ENCODE measurements at regions of chr12 and their contacts with region 1.

Region 1: DNA sequence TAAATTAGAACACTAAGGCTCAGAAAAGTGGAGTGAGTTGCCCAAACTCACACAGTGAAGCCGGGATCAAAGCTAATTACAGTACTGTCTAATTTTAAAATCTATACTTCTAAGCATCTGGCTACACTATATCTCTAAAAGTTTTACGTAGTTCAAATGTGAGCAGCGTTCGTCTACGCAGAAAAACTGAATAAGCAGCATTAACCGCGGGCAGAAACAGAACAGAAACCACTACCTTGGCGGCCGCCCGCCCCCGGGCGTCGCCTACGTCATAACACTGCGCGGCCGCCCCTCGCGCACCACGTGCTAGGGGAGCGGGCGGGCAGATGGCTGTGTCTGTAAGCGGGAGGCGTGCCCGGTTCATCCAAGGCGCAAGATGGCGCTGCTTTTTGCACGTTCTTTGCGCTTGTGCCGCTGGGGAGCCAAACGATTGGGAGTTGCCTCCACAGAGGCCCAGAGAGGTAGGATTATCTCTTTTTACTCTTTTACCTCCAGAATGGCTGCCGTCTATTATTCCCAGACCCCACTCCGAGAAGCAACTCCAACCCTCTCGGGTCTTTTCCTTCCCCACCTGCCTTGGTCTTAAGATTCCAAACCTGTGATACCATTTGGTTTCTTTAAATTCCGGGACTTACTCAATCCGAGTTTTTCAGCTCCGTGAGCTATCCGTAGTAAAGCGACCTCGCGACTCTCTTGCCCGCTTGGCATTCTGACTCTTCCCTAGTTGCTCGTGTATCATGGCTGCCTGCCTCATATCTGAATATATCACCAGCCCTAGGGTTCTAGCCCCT is at the start of gene SPRYD4:
- H3K4me3 Mint-ChIP-seq: peak within 1 kb of the TSS; percentile 94
- H3K27ac Mint-ChIP-seq: peak within 1 kb of the TSS; percentile 98
- H3K4me1 Mint-ChIP-seq: peaks cover 33% of the 10 kb centered on the region
- H3K27me3 Mint-ChIP-seq: no peaks in the 10 kb centered on the region

Region 2: GRCh38 chr12:56359851-56360767 is 108.3 kb before region 1 on chr12 and contains the start of gene STAT2:
- intact Hi-C with region 1: loop called (anchors 1 kb)
- H3K4me3 Mint-ChIP-seq: peak within 1 kb of the TSS; percentile 86
- H3K27ac Mint-ChIP-seq: peak within 1 kb of the TSS; percentile 91
- H3K4me1 Mint-ChIP-seq: peaks cover 15% of the 10 kb centered on the region
- H3K27me3 Mint-ChIP-seq: no peaks in the 10 kb centered on the region

Region 3: GRCh38 chr12:56488041-56488955 is 19.9 kb after region 1 on chr12 and contains the start of gene GLS2:
- intact Hi-C with region 1: no loop called
- H3K4me3 Mint-ChIP-seq: peak within 1 kb of the TSS; percentile 81
- H3K27ac Mint-ChIP-seq: no peak within 1 kb of the TSS
- H3K4me1 Mint-ChIP-seq: peaks cover 24% of the 10 kb centered on the region
- H3K27me3 Mint-ChIP-seq: peaks cover 60% of the 10 kb centered on the region

Measured in dendritic cell treated with granulocyte-macrophage colony-stimulating factor and Interleukin-4, amounts not matched to agents 40 ng/mL and 50 ng/mL, for 4 days (primary cell).